Psoas muscle (tissue), 8 donors: ENCODE measurements at regions of chr17 and their contacts with region 1.

Region 1: DNA sequence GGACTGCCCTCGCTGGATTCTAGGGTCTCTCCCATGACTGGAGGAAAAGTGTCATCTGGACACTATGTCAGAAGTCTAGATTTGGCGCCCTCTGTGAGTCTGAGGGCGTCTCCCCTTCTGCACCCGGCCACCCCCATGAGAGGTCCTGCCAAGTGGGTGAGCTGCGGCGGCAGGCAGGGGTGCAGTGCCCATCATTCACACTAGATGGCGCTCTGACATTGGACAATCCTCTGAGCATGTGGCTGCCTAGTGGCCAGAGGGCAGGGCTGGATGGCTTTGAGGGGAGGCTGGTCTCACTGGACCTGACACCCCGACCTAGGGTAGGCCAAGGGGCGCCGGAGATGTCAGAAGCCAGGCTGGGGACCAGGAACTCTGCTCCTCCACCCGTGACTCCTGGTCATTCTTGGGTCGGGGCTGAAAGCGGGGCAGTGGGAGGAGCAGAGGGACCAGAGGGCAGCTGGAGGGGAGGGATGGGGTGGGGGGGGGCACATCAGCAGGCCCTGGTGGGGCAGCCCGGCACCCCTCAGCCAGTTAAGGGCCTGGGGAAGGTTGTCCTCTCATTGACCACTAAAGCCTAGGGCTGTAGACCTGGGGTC is 28.0 kb downstream of the MRM1 start:
- DNase-seq: peak; percentile 71 to 86
- ATAC-seq: peak; percentile 83 to 94 (median 94)
- H3K4me3 ChIP-seq: no peak overlapping the region
- H3K27ac ChIP-seq: no peak overlapping the region
- H3K4me1 ChIP-seq: no peaks in the 10 kb centered on the region
- H3K27me3 ChIP-seq: peaks cover 0 to 5% (median 4%) of the 10 kb centered on the region in 3 donors
- CTCF ChIP-seq: peak; percentile 99

Region 2: GRCh38 chr17:36948717-36949460 is 319.5 kb after region 1 on chr17 and contains the start of gene AATF:
- intact Hi-C with region 1: loop called in 1 of 2 experiments (anchors 10 kb)
- DNase-seq: peak; percentile 97 to 98
- ATAC-seq: peak; percentile 99 to 100 (median 100)
- H3K4me3 ChIP-seq: peak within 1 kb of the TSS; percentile 74
- H3K27ac ChIP-seq: peak within 1 kb of the TSS; percentile 90
- H3K4me1 ChIP-seq: peaks cover 21% of the 10 kb centered on the region
- H3K27me3 ChIP-seq: peaks cover 5 to 41% (median 15%) of the 10 kb centered on the region in 3 donors
- CTCF ChIP-seq: no peak
- total RNA-seq, gene AATF: 23.5 to 40.6 (median 36.6) TPM

Region 3: GRCh38 chr17:37047631-37048104 is 418.3 kb after region 1 on chr17:
- intact Hi-C with region 1: loop called (anchors 1 to 5 kb)
- DNase-seq: peak; percentile 75 to 85
- ATAC-seq: peak; percentile 83 to 96 (median 92)
- H3K4me3 ChIP-seq: no peak overlapping the region
- H3K27ac ChIP-seq: no peak overlapping the region
- H3K4me1 ChIP-seq: no peaks in the 10 kb centered on the region
- H3K27me3 ChIP-seq: no peaks in the 10 kb centered on the region
- CTCF ChIP-seq: peak; percentile 86

Region 4: GRCh38 chr17:37098910-37099664 is 469.7 kb after region 1 on chr17:
- intact Hi-C with region 1: loop called in 1 of 2 experiments (anchors 1 kb)
- DNase-seq: no peak
- ATAC-seq: peak in 3 of 4 donors; percentile 30 to 77 (median 52)
- H3K4me3 ChIP-seq: no peak overlapping the region
- H3K27ac ChIP-seq: no peak overlapping the region
- H3K4me1 ChIP-seq: no peaks in the 10 kb centered on the region
- H3K27me3 ChIP-seq: no peaks in the 10 kb centered on the region
- CTCF ChIP-seq: no peak

Region 5: GRCh38 chr17:37219876-37220606 is 590.7 kb after region 1 on chr17:
- intact Hi-C with region 1: loop called in 1 of 2 experiments (anchors 5 kb)
- DNase-seq: no peak
- ATAC-seq: no peak
- H3K4me3 ChIP-seq: no peak overlapping the region
- H3K27ac ChIP-seq: peak overlapping the region; percentile 5
- H3K4me1 ChIP-seq: no peaks in the 10 kb centered on the region
- H3K27me3 ChIP-seq: no peaks in the 10 kb centered on the region
- CTCF ChIP-seq: no peak